K562 (cell line): ENCODE measurements at regions of chr3 and their contacts with region 1.

Region 1: GRCh38 chr3:177777699-177778098 is 580.4 kb upstream of the TBL1XR1 start:
- DNase-seq: peak; percentile 50 to 75 (median 56)
- ATAC-seq: peak; percentile 98
- H3K4me3 ChIP-seq: no peak overlapping the region
- H3K27ac ChIP-seq: no peak overlapping the region
- H3K4me1 ChIP-seq: no peaks in the 10 kb centered on the region; a peak in 1 of 5 replicates
- H3K27me3 ChIP-seq: no peaks in the 10 kb centered on the region
- CTCF ChIP-seq: peak; percentile 68 to 78 (median 76)
- EP300 ChIP-seq: no peak
- POLR2A ChIP-seq: no peak
- RAD21 ChIP-seq: peak; percentile 87 to 93

Region 2: DNA sequence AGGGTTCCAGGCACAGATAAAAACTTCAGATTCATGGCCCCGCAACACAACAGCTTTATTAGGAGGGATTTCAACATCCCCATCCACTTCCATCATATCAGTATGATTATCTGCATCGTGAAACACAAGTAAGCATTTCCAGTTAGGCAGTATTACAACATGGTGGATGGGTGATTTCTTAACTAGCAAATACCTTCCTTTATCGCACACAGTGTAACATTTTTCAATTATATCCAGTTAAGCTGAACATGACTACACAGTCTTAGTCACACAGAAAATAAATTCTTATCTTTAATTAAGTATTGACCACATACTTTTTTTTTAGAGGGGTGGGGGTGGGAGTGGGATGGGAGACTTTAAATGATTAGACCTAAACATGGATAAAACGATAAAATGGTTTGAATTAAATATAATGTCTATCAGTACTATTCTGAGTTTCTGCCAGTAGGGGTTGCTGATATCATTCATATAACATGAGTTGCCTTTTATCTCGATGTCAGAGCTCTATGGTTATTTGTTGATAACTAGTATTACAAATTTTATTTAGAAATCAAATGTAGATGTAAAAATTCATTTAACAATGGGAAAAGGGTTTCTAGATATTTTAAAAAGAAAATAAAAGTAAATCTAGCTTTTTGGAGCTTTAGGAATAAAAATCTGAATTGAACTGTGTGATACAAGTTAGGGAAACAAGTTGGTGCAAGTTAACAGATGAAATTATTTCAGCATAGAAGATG is 727.0 kb before region 1 on chr3:
- CTCF ChIA-PET with region 1: interaction called, 4 read pairs
- POLR2A ChIA-PET with region 1: no interaction called
- in situ Hi-C with region 1: no loop called
- intact Hi-C with region 1: loop called (anchors 10 kb)
- DNase-seq: peak in 3 of 4 experiments; percentile 17 to 34 (median 20)
- ATAC-seq: peak; percentile 75
- H3K4me3 ChIP-seq: no peak overlapping the region
- H3K27ac ChIP-seq: no peak overlapping the region
- H3K4me1 ChIP-seq: no peaks in the 10 kb centered on the region; a peak in 2 of 5 replicates
- H3K27me3 ChIP-seq: no peaks in the 10 kb centered on the region
- CTCF ChIP-seq: peak in 1 of 3 experiments; percentile 57; a peak in 2 of 6 replicates
- EP300 ChIP-seq: no peak
- POLR2A ChIP-seq: no peak
- RAD21 ChIP-seq: peak; percentile 71 to 73

Region 3: DNA sequence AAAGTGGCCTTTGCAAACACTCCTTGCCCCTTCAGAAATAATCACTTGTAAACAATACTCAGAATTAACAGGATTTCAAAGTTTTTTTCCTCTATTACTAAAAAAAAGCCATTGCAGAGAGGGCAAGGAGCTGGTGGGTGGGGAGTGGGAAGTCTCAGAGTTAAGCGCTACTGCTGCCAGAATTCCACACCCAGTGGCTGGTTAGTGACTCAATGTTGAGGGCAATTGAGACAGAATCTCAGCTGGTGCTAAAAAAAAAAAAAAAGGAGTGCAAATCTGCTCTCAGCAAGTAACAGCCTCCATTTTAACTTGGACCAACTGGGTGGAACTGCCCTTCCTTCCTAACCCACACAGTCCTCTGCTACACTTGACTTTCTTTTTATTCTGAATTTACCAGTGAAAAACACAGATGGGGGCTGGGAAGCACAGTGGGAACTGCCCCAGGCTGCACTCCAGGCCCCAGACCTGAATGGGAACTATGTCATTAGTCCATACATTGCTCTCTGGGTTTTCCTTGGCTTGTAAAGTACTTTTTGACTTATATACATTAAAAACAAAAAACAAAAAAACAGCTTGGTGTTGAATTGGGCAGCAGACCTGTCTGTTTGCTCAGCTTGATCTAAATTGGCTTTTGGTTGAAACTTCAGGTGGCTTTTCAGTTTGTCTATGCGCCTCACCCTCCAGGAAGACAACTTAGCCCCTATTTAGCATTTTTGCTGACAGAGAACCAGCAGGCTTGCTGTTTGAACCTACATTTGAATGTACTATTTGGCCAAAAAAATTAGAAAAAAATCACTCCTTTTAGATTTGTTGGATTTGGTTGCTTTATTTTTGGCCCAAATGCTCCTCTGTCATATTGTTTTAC is 222.6 kb before region 1 on chr3:
- CTCF ChIA-PET with region 1: no interaction called
- POLR2A ChIA-PET with region 1: no interaction called
- in situ Hi-C with region 1: no loop called
- intact Hi-C with region 1: loop called (anchors 5 kb)
- DNase-seq: no peak
- ATAC-seq: no peak
- H3K4me3 ChIP-seq: no peak overlapping the region
- H3K27ac ChIP-seq: no peak overlapping the region
- H3K4me1 ChIP-seq: no peaks in the 10 kb centered on the region
- H3K27me3 ChIP-seq: no peaks in the 10 kb centered on the region
- CTCF ChIP-seq: no peak
- EP300 ChIP-seq: no peak
- POLR2A ChIP-seq: no peak
- RAD21 ChIP-seq: no peak

Region 4: GRCh38 chr3:177887475-177887874 is 109.8 kb after region 1 on chr3:
- CTCF ChIA-PET with region 1: no interaction called
- POLR2A ChIA-PET with region 1: no interaction called
- in situ Hi-C with region 1: no loop called
- intact Hi-C with region 1: no loop called
- DNase-seq: no peak
- ATAC-seq: no peak
- H3K4me3 ChIP-seq: no peak overlapping the region
- H3K27ac ChIP-seq: no peak overlapping the region
- H3K4me1 ChIP-seq: no peaks in the 10 kb centered on the region; a peak in 1 of 5 replicates
- H3K27me3 ChIP-seq: no peaks in the 10 kb centered on the region
- CTCF ChIP-seq: no peak
- EP300 ChIP-seq: no peak
- POLR2A ChIP-seq: no peak
- RAD21 ChIP-seq: no peak